ENCODE measurements at regions of chr20 and their contacts with region 1.

Region 1: DNA sequence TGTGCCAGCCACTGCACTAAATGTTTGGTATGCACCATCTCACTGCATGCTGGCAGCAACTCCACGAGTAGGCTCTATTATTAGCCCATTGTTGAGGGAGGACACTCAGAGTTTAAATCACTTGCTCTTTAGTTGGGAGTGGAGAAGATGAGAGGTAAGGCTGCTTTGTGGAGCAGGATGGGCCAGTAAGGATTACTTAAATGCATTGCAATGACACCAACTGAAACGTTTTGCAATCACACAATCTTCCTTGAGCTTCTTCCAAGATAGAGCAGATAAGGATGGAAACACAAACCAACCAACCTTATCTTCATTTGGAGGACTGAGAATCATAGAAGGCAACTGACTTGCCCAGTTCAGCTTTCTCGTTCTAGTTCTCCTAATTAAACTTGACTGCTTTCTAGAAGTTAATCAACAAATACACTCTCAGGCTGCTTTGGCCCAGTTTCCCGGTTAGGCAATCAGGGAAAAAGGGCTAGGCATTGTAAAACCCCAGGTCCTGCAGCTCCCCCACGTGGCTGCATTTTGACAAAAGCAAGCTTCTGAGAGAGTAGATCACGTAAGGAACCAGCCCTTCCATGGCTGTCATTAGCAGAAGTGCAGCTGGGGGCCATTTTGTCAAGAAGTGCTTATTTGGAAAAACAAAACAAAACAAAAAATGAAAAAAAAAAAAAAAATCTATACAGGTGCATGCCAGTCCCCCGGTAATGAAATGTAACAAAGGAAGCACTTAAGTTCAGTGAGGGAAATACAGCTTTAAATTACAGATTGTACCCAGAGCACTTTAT is 130.6 kb downstream of the BCAS1 start:
- DNase-seq: peak; percentile 99
- H3K4me3 Mint-ChIP-seq: peak overlapping the region; percentile 28
- H3K27ac Mint-ChIP-seq: peak overlapping the region; percentile 68
- H3K4me1 Mint-ChIP-seq: peaks cover 78% of the 10 kb centered on the region
- H3K27me3 Mint-ChIP-seq: no peaks in the 10 kb centered on the region
- CTCF ChIP-seq: peak; percentile 92

Region 2: DNA sequence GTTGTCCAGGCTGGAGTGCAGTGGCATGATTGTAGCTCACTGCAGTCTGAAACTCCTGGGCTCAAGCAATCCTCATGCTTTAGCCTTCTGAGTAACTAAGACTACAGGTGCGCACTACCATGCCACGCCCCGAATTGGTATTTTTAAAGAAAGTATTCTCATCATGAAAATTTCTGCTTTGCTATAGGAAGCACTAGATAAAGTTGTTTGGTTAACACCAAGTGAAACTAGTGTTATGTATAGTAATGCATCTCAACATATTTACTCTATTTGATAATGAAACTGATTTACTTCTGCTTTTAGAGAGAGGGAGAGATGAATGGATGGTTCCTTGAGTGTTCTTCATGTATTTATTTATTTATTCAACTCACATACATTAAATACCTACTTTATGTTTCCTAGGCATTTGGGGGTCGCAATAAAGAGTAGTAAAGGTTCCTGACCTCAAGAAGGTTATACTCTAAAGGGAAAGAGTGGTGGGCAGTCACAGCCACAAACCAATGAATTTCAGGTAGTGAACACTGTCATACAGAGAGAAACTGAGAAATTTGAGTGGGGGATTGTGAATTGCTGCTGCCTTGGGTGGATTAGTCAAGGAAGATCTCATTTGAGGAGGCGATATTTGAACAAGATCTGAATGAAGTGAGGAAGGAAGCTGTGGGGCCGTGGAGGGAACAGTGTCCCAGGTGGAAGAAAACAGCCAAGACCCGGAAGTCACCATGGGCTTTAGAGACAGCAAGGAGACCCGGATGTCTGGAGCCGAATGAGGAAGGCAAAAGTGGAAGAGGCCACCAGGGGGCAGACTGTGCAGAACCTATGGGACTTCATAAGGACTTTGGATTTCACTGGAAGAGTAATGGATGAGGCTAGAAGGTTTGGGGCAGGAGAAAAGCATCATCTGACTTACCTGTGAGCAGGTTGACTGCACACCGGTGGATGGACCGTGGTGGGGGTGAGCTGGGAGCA is 782.0 kb before region 1 on chr20:
- CTCF ChIA-PET with region 1: no interaction called
- intact Hi-C with region 1: loop called (anchors 5 kb)
- DNase-seq: peak; percentile 75
- H3K4me3 Mint-ChIP-seq: no peak overlapping the region
- H3K27ac Mint-ChIP-seq: no peak overlapping the region
- H3K4me1 Mint-ChIP-seq: peaks cover 7% of the 10 kb centered on the region
- H3K27me3 Mint-ChIP-seq: peaks cover 11% of the 10 kb centered on the region
- CTCF ChIP-seq: peak; percentile 71

Region 3: GRCh38 chr20:53547664-53548239 is 392.0 kb before region 1 on chr20:
- CTCF ChIA-PET with region 1: interaction called, 11 read pairs
- intact Hi-C with region 1: no loop called
- DNase-seq: peak; percentile 62
- H3K4me3 Mint-ChIP-seq: no peak overlapping the region
- H3K27ac Mint-ChIP-seq: no peak overlapping the region
- H3K4me1 Mint-ChIP-seq: no peaks in the 10 kb centered on the region
- H3K27me3 Mint-ChIP-seq: no peaks in the 10 kb centered on the region
- CTCF ChIP-seq: peak; percentile 91

Region 4: DNA sequence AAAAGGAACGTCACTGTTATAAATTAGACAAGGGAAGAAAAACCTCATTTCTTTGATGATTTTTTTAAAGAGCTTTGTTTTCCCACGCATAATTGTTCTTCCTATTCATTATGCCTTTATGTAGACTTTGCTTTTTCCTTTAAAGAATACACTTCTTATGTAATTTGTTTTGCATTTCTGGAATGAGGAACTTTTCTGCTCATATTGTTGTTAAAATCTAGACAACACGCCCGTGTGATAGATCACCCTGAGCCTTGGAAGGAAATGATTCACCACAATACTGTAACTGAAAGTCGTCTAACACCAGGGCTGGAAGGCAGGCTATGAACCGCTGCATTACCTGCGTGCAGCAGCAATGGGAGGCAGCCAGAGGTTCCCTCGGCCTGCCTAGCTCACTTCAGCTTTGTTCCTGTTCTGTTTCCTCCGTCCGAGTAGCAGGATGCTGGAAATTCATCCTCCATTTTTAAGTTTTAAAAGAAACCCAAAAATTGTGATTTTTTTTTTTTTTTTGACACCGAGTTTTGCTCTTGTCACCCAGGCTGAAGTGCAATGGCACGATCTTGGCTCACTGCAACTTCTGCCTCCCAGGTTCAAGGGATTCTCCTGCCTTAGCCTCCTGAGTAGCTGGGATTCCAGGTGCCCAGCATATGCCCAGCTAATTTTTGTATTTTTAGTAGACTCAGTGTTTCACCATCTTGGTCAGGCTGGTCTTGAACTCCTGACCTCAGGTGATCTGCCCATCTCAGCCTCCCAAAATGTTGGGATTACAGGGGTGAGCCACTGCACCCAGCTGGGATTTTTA is 296.5 kb before region 1 on chr20:
- CTCF ChIA-PET with region 1: interaction called, 4 read pairs
- intact Hi-C with region 1: loop called (anchors 2 kb)
- DNase-seq: peak; percentile 75
- H3K4me3 Mint-ChIP-seq: peak overlapping the region; percentile 50
- H3K27ac Mint-ChIP-seq: peak overlapping the region; percentile 89
- H3K4me1 Mint-ChIP-seq: peaks cover 9% of the 10 kb centered on the region
- H3K27me3 Mint-ChIP-seq: no peaks in the 10 kb centered on the region
- CTCF ChIP-seq: no peak

Region 5: GRCh38 chr20:53738039-53738944 is 201.5 kb before region 1 on chr20:
- CTCF ChIA-PET with region 1: interaction called, 15 read pairs
- intact Hi-C with region 1: loop called (anchors 2 kb)
- DNase-seq: peak; percentile 88
- H3K4me3 Mint-ChIP-seq: peak overlapping the region; percentile 77
- H3K27ac Mint-ChIP-seq: peak overlapping the region; percentile 98
- H3K4me1 Mint-ChIP-seq: peaks cover 73% of the 10 kb centered on the region
- H3K27me3 Mint-ChIP-seq: no peaks in the 10 kb centered on the region
- CTCF ChIP-seq: no peak

Region 6: GRCh38 chr20:53778041-53778516 is 161.7 kb before region 1 on chr20:
- CTCF ChIA-PET with region 1: no interaction called
- intact Hi-C with region 1: no loop called
- DNase-seq: no peak
- H3K4me3 Mint-ChIP-seq: no peak overlapping the region
- H3K27ac Mint-ChIP-seq: no peak overlapping the region
- H3K4me1 Mint-ChIP-seq: peaks cover 21% of the 10 kb centered on the region
- H3K27me3 Mint-ChIP-seq: no peaks in the 10 kb centered on the region
- CTCF ChIP-seq: no peak

Region 7: GRCh38 chr20:53899351-53900167 is 40.2 kb before region 1 on chr20:
- CTCF ChIA-PET with region 1: interaction called, 19 read pairs
- intact Hi-C with region 1: no loop called
- DNase-seq: peak; percentile 50
- H3K4me3 Mint-ChIP-seq: no peak overlapping the region
- H3K27ac Mint-ChIP-seq: peak overlapping the region; percentile 89
- H3K4me1 Mint-ChIP-seq: peaks cover 62% of the 10 kb centered on the region
- H3K27me3 Mint-ChIP-seq: no peaks in the 10 kb centered on the region
- CTCF ChIP-seq: no peak

Region 8: DNA sequence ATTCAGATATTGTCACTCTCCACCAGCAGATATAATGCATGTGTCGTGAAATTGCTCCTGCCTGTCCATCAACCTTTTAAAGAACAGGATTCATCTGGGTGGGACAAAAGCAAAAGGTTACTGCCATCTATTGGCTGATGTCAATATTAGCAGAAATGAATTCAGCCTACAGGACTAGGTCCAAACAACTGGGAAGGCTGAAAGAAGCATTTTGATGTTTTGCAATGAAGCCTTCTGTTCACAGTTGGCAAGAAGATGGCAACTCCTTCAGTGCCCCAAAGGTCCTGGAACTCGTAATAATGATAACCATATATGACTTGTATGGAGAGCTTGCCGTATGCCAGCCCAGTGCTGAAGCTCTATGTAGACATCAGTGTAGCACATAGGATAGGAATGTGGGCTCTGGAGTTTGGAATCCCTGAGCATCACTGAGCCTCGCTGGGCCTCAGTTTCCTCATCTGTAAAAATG is 123.1 kb after region 1 on chr20:
- CTCF ChIA-PET with region 1: interaction called, 3 read pairs
- intact Hi-C with region 1: loop called (anchors 1 kb)
- DNase-seq: peak; percentile 33
- H3K4me3 Mint-ChIP-seq: no peak overlapping the region
- H3K27ac Mint-ChIP-seq: no peak overlapping the region
- H3K4me1 Mint-ChIP-seq: peaks cover 22% of the 10 kb centered on the region
- H3K27me3 Mint-ChIP-seq: no peaks in the 10 kb centered on the region
- CTCF ChIP-seq: peak; percentile 69